ENCODE measurements at regions of chr12 and their contacts with region 1.

Region 1: DNA sequence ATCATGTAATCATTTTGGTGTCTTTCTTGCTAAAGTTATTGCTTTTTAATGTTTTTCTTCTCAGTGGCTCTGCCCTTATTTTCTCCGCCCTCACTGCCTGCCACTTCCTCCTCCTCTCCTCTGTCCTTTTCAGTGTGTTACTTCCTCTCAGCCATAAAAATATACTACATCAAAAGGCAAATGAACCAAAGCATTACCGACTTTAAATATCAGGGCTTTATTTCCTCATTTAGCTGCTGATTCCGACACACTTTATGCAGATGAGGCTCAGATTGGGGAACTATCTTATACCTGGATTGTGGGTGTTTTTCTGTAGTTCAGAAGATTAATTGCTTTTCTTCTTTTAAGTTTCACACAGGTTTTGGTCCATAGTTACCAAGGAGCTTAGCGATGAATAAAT is 118.1 kb downstream of the CMAS start:
- DNase-seq: peak in 4 of 5 donors; percentile 28 to 57 (median 40)
- H3K4me3 ChIP-seq: no peak overlapping the region
- H3K4me3 Mint-ChIP-seq: peak overlapping the region; percentile 33 to 78 (median 56)
- H3K27ac ChIP-seq: peak overlapping the region; percentile 40
- H3K27ac Mint-ChIP-seq: peak overlapping the region; percentile 31 to 89 (median 72)
- H3K4me1 ChIP-seq: peaks cover 58% of the 10 kb centered on the region
- H3K4me1 Mint-ChIP-seq: peaks cover 40 to 57% (median 49%) of the 10 kb centered on the region in 4 donors
- H3K27me3 ChIP-seq: no peaks in the 10 kb centered on the region
- H3K27me3 Mint-ChIP-seq: no peaks in the 10 kb centered on the region

Region 2: GRCh38 chr12:21631367-21631766 is 532.8 kb before region 1 on chr12:
- CTCF ChIA-PET with region 1: no interaction called
- POLR2A ChIA-PET with region 1: no interaction called
- intact Hi-C with region 1: no loop called
- DNase-seq: no peak
- H3K4me3 ChIP-seq: no peak overlapping the region
- H3K4me3 Mint-ChIP-seq: no peak overlapping the region
- H3K27ac ChIP-seq: no peak overlapping the region
- H3K27ac Mint-ChIP-seq: peak overlapping the region in 6 of 7 donors; percentile 3 to 83 (median 57)
- H3K4me1 ChIP-seq: no peaks in the 10 kb centered on the region
- H3K4me1 Mint-ChIP-seq: peaks cover 5 to 16% (median 11%) of the 10 kb centered on the region in 4 donors
- H3K27me3 ChIP-seq: no peaks in the 10 kb centered on the region
- H3K27me3 Mint-ChIP-seq: no peaks in the 10 kb centered on the region

Region 3: GRCh38 chr12:21983095-21983494 is 181.0 kb before region 1 on chr12:
- CTCF ChIA-PET with region 1: no interaction called
- POLR2A ChIA-PET with region 1: no interaction called
- intact Hi-C with region 1: no loop called
- DNase-seq: no peak
- H3K4me3 ChIP-seq: no peak overlapping the region
- H3K4me3 Mint-ChIP-seq: no peak overlapping the region
- H3K27ac ChIP-seq: no peak overlapping the region
- H3K27ac Mint-ChIP-seq: no peak overlapping the region
- H3K4me1 ChIP-seq: no peaks in the 10 kb centered on the region
- H3K4me1 Mint-ChIP-seq: peaks cover 0 to 4% (median 2%) of the 10 kb centered on the region in 4 donors
- H3K27me3 ChIP-seq: no peaks in the 10 kb centered on the region
- H3K27me3 Mint-ChIP-seq: peaks cover 15% of the 10 kb centered on the region in 2 donors

Region 4: GRCh38 chr12:22206116-22206728 is 42.1 kb after region 1 on chr12:
- CTCF ChIA-PET with region 1: no interaction called
- POLR2A ChIA-PET with region 1: no interaction called
- intact Hi-C with region 1: loop called (anchors 5 kb)
- DNase-seq: no peak
- H3K4me3 ChIP-seq: no peak overlapping the region
- H3K4me3 Mint-ChIP-seq: no peak overlapping the region
- H3K27ac ChIP-seq: no peak overlapping the region
- H3K27ac Mint-ChIP-seq: no peak overlapping the region
- H3K4me1 ChIP-seq: no peaks in the 10 kb centered on the region
- H3K4me1 Mint-ChIP-seq: peaks cover 0 to 11% (median 3%) of the 10 kb centered on the region in 4 donors
- H3K27me3 ChIP-seq: no peaks in the 10 kb centered on the region
- H3K27me3 Mint-ChIP-seq: no peaks in the 10 kb centered on the region

Measured in CD4-positive, alpha-beta memory T cell (primary cell).